B cell (primary cell): ENCODE measurements at regions of chr9 and their contacts with region 1.

Region 1: GRCh38 chr9:128656416-128657343 is at the start of gene DYNC2I2:
- DNase-seq: peak; percentile 90
- ATAC-seq: peak; percentile 80
- H3K4me3 ChIP-seq: peak within 1 kb of the TSS; percentile 66 to 97 (median 89)
- H3K4me3 Mint-ChIP-seq: peak within 1 kb of the TSS; percentile 96
- H3K27ac ChIP-seq: peak within 1 kb of the TSS; percentile 92 to 95
- H3K27ac Mint-ChIP-seq: peak within 1 kb of the TSS; percentile 100
- H3K4me1 ChIP-seq: peaks cover 2 to 14% of the 10 kb centered on the region in 2 donors
- H3K4me1 Mint-ChIP-seq: peaks cover 13% of the 10 kb centered on the region
- H3K27me3 ChIP-seq: no peaks in the 10 kb centered on the region
- H3K27me3 Mint-ChIP-seq: no peaks in the 10 kb centered on the region
- CTCF ChIP-seq: no peak
- total RNA-seq, gene DYNC2I2: 76.6 and 83.4 TPM in 2 replicates

Region 2: DNA sequence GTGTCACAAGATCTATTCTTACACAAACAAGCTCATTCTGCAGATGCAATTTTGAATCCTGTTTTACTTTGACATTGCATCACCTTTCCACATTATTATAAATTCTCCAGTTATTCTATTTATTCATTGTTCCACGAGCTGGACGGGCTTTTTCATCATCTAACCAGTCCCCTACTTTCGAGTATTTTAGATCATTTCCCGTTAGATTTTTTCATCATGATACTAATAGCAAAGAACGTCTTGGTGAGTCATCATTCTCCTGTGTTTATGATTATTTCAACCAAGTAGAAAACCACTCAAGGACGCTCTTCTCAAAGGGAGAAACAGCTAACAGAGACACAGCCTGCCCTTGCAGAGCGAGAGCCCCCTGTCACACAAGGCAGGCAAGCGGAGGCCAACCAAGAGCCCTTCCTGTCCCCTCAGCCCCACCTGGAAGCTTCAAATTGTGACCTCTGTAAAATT is 481.5 kb before region 1 on chr9:
- CTCF ChIA-PET with region 1: no interaction called
- POLR2A ChIA-PET with region 1: no interaction called
- intact Hi-C with region 1: no loop called
- DNase-seq: no peak
- ATAC-seq: no peak
- H3K4me3 ChIP-seq: no peak overlapping the region
- H3K4me3 Mint-ChIP-seq: no peak overlapping the region
- H3K27ac ChIP-seq: no peak overlapping the region
- H3K27ac Mint-ChIP-seq: no peak overlapping the region
- H3K4me1 ChIP-seq: no peaks in the 10 kb centered on the region
- H3K4me1 Mint-ChIP-seq: no peaks in the 10 kb centered on the region
- H3K27me3 ChIP-seq: no peaks in the 10 kb centered on the region
- H3K27me3 Mint-ChIP-seq: no peaks in the 10 kb centered on the region
- CTCF ChIP-seq: no peak

Region 3: DNA sequence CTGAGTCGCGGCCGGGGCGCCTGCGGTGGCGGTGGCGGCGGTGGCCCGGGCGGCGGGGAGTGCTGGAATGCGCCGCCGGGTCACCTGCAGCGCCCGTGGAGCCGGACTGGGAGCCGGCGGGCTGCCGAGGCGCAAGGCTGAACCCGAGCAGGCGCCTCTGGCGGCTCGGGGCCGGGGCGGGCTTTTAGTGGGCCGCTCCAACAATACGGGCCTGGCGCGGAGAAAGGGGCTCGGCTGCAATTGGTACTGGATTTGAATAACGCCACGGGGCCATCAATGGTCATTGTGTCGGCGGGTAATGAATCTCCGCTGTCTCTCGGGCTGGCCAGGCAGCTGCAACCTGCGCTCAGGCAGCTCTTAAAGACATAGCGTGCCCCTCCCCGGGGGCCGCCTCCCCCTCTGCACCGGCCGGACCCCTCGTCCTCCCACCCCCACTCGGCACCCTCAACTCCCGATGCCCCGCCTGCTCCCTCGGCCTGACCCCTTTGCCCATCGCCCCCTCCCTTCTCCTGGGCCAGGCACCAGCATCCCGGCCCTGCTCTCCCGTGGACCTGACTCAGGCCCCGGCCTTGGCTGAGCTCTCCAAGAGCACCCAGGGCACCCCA is 263.4 kb before region 1 on chr9:
- CTCF ChIA-PET with region 1: no interaction called
- POLR2A ChIA-PET with region 1: no interaction called
- intact Hi-C with region 1: no loop called
- DNase-seq: no peak
- ATAC-seq: no peak
- H3K4me3 ChIP-seq: no peak overlapping the region
- H3K4me3 Mint-ChIP-seq: no peak overlapping the region
- H3K27ac ChIP-seq: no peak overlapping the region
- H3K27ac Mint-ChIP-seq: no peak overlapping the region
- H3K4me1 ChIP-seq: no peaks in the 10 kb centered on the region
- H3K4me1 Mint-ChIP-seq: peaks cover 3% of the 10 kb centered on the region
- H3K27me3 ChIP-seq: no peaks in the 10 kb centered on the region
- H3K27me3 Mint-ChIP-seq: no peaks in the 10 kb centered on the region
- CTCF ChIP-seq: no peak

Region 4: GRCh38 chr9:128702445-128702948 is 45.8 kb after region 1 on chr9 and contains the start of gene PKN3:
- CTCF ChIA-PET with region 1: interaction called, 6 read pairs
- POLR2A ChIA-PET with region 1: no interaction called
- intact Hi-C with region 1: loop called (anchors 5 kb)
- DNase-seq: peak; percentile 89
- ATAC-seq: peak; percentile 89
- H3K4me3 ChIP-seq: peak within 1 kb of the TSS; percentile 11 to 83 (median 67)
- H3K4me3 Mint-ChIP-seq: peak within 1 kb of the TSS; percentile 91
- H3K27ac ChIP-seq: no peak within 1 kb of the TSS
- H3K27ac Mint-ChIP-seq: peak within 1 kb of the TSS; percentile 76
- H3K4me1 ChIP-seq: peaks cover 9 to 17% of the 10 kb centered on the region in 2 donors
- H3K4me1 Mint-ChIP-seq: peaks cover 10% of the 10 kb centered on the region
- H3K27me3 ChIP-seq: no peaks in the 10 kb centered on the region
- H3K27me3 Mint-ChIP-seq: no peaks in the 10 kb centered on the region
- CTCF ChIP-seq: peak; percentile 96
- total RNA-seq, gene PKN3: 3.7 and 4.2 TPM in 2 replicates

Region 5: GRCh38 chr9:128771745-128772519 is 115.3 kb after region 1 on chr9 and contains the start of gene ZER1:
- CTCF ChIA-PET with region 1: no interaction called
- POLR2A ChIA-PET with region 1: no interaction called
- intact Hi-C with region 1: loop called (anchors 5 kb)
- DNase-seq: peak; percentile 95
- ATAC-seq: peak; percentile 93
- H3K4me3 ChIP-seq: peak within 1 kb of the TSS; percentile 69 to 96 (median 77)
- H3K4me3 Mint-ChIP-seq: peak within 1 kb of the TSS; percentile 97
- H3K27ac ChIP-seq: peak within 1 kb of the TSS; percentile 86 to 93
- H3K27ac Mint-ChIP-seq: peak within 1 kb of the TSS; percentile 96
- H3K4me1 ChIP-seq: peaks cover 9 to 19% of the 10 kb centered on the region in 2 donors
- H3K4me1 Mint-ChIP-seq: peaks cover 25% of the 10 kb centered on the region
- H3K27me3 ChIP-seq: no peaks in the 10 kb centered on the region
- H3K27me3 Mint-ChIP-seq: no peaks in the 10 kb centered on the region
- CTCF ChIP-seq: no peak
- total RNA-seq, gene ZER1: 42.2 and 44.0 TPM in 2 replicates

Region 6: GRCh38 chr9:129988607-129989361 is 1332.1 kb after region 1 on chr9:
- CTCF ChIA-PET with region 1: no interaction called
- POLR2A ChIA-PET with region 1: no interaction called
- intact Hi-C with region 1: no loop called
- DNase-seq: peak; percentile 92
- ATAC-seq: peak; percentile 74
- H3K4me3 ChIP-seq: peak overlapping the region in 1 of 5 experiments; percentile 45
- H3K4me3 Mint-ChIP-seq: peak overlapping the region; percentile 76
- H3K27ac ChIP-seq: peak overlapping the region; percentile 92
- H3K27ac Mint-ChIP-seq: peak overlapping the region; percentile 93
- H3K4me1 ChIP-seq: peaks cover 77 to 90% of the 10 kb centered on the region in 2 donors
- H3K4me1 Mint-ChIP-seq: peaks cover 71% of the 10 kb centered on the region
- H3K27me3 ChIP-seq: no peaks in the 10 kb centered on the region
- H3K27me3 Mint-ChIP-seq: no peaks in the 10 kb centered on the region
- CTCF ChIP-seq: no peak